ENCODE measurements at regions of chr10 and their contacts with region 1.

Region 1: DNA sequence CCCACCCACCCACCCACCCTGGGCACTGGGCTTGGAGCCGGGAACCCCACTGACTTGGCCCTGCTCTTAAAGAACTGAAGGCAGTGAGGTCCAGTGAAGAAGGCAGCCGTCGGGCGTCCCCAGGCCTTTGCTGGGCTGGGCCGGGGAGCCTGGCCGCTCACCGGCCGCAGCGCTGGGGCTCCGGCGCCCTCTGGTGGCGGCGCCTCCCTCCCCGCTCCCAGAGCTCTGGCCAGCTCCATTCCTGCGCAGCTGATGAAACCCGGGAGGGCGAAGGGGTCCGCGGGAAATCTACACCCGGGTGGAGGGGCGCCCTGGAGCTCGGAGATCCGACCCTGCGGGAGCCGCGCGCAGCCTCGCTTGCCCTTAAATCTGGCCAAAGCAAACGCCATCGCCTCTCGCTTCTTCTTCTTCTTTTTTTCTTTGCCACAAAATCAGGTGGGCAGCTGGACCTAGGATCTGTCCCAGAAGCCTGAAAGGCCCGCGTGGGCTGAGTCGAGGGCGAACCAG is 1.7 kb upstream of the CXCL12 start:
- DNase-seq: peak; percentile 68 to 81 (median 77)
- ATAC-seq: peak; percentile 72
- H3K4me3 ChIP-seq: no peak overlapping the region
- H3K27ac ChIP-seq: peak overlapping the region in 1 of 4 donors; percentile 75
- H3K4me1 ChIP-seq: peaks cover 47% of the 10 kb centered on the region
- H3K27me3 ChIP-seq: no peaks in the 10 kb centered on the region
- CTCF ChIP-seq: peak; percentile 82 to 97 (median 92)
- POLR2A ChIP-seq: no peak

Region 2: DNA sequence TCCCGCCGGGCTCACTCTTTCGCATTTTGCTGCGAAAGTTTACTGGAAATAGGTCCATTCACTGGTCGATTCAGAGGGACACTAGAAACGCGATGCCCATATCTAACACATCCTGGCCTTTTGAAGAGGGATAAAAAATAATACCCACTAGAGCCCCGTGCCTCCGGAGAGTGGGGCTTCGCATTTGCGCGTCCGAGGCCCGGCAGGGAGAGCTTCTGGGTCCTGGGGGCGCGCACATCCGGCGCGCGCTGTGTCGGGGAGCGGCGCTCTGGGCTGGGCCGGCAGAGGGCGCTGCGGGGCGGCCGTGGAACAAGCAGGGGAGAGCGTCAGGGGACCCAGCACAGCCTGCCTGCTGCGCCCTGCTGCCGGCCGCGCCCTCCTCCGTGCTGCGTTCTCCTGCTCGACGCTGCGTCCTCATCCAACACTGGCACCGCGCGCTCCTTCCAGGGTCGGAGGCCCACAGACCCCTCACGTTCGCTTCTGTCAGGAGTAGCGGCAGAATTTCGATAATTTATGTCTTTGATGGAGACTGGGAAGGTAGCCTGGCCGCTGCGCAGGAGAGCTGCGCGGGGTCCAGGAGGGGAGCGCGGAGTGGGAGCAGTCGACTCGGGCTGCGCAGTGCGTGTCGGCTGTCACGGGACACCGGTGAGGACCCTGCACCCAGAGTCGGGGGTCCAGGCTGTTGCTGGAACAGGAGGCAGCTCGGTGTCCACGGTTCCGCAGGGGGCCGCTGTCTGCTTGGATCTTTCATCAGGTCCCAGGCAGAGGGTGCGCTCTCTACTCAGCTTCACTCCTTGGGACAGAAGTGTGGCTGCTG is 696.4 kb before region 1 on chr10:
- intact Hi-C with region 1: loop called (anchors 5 kb)
- DNase-seq: peak; percentile 83 to 90 (median 88)
- ATAC-seq: peak; percentile 92
- H3K4me3 ChIP-seq: peak overlapping the region; percentile 29 to 32
- H3K27ac ChIP-seq: peak overlapping the region; percentile 68 to 87 (median 85)
- H3K4me1 ChIP-seq: peaks cover 36% of the 10 kb centered on the region
- H3K27me3 ChIP-seq: no peaks in the 10 kb centered on the region
- CTCF ChIP-seq: peak; percentile 83 to 97 (median 94)
- POLR2A ChIP-seq: peak; percentile 68 to 86 (median 84)

Region 3: DNA sequence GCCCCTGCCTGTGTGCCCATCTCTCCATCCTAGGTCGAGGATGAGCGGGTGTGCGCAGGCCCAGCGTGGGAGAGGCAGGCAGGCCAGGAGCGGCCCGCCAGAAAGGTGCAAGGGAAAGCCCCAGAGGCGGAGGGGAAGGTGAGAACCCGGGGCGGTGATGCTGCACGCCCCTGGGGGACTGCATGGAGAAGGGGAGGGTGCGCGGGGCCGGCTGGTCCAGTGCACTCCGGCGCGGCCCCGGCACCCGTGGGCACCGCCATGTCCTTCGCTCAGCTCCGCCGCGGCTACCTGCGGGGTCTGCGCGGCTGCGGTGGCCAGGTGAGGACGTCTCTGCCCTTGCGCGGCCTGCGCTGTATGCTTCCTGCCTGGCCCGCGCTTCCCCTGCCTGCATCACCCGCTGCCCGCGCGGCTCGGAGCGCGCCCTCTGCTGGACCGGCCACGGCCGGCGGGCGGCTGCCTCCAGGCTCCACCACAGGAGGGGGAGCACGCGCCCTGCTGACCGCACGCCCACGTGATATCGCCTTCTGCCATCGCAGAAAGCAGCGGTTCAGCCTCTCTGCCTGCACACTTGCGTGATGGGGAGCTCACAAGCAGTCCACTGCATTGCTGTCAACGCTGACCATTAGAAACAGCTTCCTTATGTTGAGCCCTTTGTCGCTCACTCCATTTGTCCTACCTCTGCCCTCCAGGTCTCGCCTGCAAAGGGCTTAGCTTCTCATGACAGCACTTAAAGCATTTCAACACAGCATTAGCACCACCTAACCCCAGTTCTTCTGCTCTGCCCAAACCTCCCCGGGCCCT is 75.6 kb before region 1 on chr10:
- intact Hi-C with region 1: loop called (anchors 10 kb)
- DNase-seq: peak; percentile 90 to 94 (median 92)
- ATAC-seq: peak; percentile 100
- H3K4me3 ChIP-seq: no peak overlapping the region
- H3K27ac ChIP-seq: peak overlapping the region in 2 of 4 donors; percentile 21 to 23
- H3K4me1 ChIP-seq: peaks cover 10% of the 10 kb centered on the region
- H3K27me3 ChIP-seq: no peaks in the 10 kb centered on the region
- CTCF ChIP-seq: peak; percentile 91 to 99 (median 95)
- POLR2A ChIP-seq: peak; percentile 37 to 60 (median 58)

Region 4: GRCh38 chr10:44477046-44477425 is 90.4 kb after region 1 on chr10:
- intact Hi-C with region 1: no loop called
- DNase-seq: peak in 1 of 4 donors; percentile 42
- ATAC-seq: no peak
- H3K4me3 ChIP-seq: no peak overlapping the region
- H3K27ac ChIP-seq: no peak overlapping the region
- H3K4me1 ChIP-seq: no peaks in the 10 kb centered on the region
- H3K27me3 ChIP-seq: no peaks in the 10 kb centered on the region
- CTCF ChIP-seq: no peak
- POLR2A ChIP-seq: no peak

Region 5: DNA sequence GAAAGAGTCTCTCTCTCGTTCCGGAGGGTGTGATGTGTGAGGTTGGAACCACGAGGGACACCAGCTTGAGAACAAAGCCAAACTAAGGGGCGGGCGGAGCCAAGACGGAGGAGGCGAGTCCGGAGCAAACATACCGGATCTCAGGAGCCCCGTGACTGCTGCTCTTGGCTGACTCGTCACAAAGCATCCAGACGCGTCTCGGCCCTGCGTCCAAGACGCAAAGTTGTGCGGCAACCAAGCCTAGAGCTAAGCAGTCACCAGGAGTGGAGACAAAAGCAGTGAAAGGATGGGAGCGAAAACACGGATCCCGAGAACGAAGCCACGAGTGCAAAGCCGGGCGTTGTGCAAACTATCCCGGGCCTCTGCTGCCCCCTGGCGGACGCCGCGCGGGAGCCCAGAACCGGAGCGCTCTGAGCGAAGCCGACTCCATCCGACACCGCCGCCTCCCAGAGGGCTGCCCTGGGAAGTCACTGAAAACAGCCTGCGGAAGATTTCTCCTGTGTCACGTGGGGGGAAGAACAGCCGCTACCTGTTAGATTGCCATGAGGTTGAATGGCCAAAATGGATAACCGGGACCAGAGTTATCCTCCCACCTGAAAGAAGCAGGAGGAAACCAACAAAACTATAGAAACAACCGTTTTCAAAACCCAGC is 478.2 kb after region 1 on chr10:
- intact Hi-C with region 1: loop called (anchors 5 kb)
- DNase-seq: peak; percentile 92 to 96 (median 94)
- ATAC-seq: peak; percentile 97
- H3K4me3 ChIP-seq: peak overlapping the region in 1 of 2 donors; percentile 26
- H3K27ac ChIP-seq: peak overlapping the region; percentile 13 to 73 (median 68)
- H3K4me1 ChIP-seq: peaks cover 16% of the 10 kb centered on the region
- H3K27me3 ChIP-seq: no peaks in the 10 kb centered on the region
- CTCF ChIP-seq: peak; percentile 95 to 99 (median 98)
- POLR2A ChIP-seq: peak in 2 of 3 donors; percentile 4 to 32